ENCODE measurements at regions of chr4 and their contacts with region 1.

Region 1: GRCh38 chr4:54322818-54323417 is 93.8 kb downstream of the PDGFRA start:
- DNase-seq: peak; percentile 20
- ATAC-seq: peak; percentile 87
- H3K4me3 ChIP-seq: no peak overlapping the region
- H3K27ac ChIP-seq: no peak overlapping the region
- H3K4me1 ChIP-seq: no peaks in the 10 kb centered on the region
- H3K27me3 ChIP-seq: no peaks in the 10 kb centered on the region
- CTCF ChIP-seq: peak; percentile 74

Region 2: GRCh38 chr4:53346920-53347852 is 975.7 kb before region 1 on chr4:
- CTCF ChIA-PET with region 1: no interaction called
- POLR2A ChIA-PET with region 1: no interaction called
- in situ Hi-C with region 1: no loop called
- intact Hi-C with region 1: no loop called
- DNase-seq: no peak
- ATAC-seq: peak; percentile 34; the same call in 1 of the 2 replicates
- H3K4me3 ChIP-seq: no peak overlapping the region
- H3K27ac ChIP-seq: no peak overlapping the region
- H3K4me1 ChIP-seq: peaks cover 3% of the 10 kb centered on the region; the same call in 1 of the 2 replicates
- H3K27me3 ChIP-seq: no peaks in the 10 kb centered on the region
- CTCF ChIP-seq: no peak

Region 3: DNA sequence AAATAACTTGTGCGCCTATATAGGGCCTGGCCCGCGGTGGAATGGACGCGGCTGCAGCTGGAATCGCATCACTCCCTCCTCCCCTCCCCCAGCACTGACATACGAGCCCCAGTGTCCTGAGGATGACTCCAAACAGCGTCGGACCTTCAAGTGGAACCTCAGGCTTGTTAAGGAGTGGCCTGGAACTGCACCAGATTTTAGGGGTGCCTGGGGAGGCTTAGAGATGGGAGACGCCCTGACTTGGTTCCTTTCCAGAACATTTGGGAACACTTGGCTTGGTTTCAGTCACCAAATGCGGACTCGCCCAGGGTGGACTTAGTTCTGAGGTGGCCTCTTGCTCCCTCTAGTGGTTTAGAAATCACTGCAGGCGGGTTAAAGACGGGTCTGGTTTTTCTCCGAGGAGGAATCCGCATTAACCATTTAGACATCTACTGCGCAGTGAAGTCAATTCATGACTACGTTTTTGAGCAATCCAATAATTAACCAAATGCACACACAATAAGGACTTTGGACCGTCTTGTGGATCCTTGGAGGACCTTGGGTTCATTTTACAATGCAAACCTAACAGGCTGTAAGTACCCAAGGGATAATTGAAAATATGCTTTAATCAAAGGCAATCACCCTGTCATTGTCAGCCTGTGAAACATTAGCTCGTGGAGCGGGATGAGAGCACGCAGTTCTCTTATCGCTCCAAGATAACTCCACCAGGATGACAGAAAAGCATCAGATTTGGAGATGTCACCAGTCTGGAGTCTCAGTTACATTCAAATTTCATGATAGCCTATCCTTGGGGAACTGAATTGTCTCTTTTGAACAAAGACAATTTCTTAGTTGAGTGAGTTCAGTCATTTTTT is 105.0 kb before region 1 on chr4:
- CTCF ChIA-PET with region 1: no interaction called
- POLR2A ChIA-PET with region 1: no interaction called
- in situ Hi-C with region 1: no loop called
- intact Hi-C with region 1: no loop called
- DNase-seq: peak; percentile 80
- ATAC-seq: peak; percentile 95
- H3K4me3 ChIP-seq: peak overlapping the region; percentile 41 to 74
- H3K27ac ChIP-seq: no peak overlapping the region
- H3K4me1 ChIP-seq: no peaks in the 10 kb centered on the region
- H3K27me3 ChIP-seq: no peaks in the 10 kb centered on the region; the same call in 1 of the 2 replicates
- CTCF ChIP-seq: peak; percentile 82

Region 4: DNA sequence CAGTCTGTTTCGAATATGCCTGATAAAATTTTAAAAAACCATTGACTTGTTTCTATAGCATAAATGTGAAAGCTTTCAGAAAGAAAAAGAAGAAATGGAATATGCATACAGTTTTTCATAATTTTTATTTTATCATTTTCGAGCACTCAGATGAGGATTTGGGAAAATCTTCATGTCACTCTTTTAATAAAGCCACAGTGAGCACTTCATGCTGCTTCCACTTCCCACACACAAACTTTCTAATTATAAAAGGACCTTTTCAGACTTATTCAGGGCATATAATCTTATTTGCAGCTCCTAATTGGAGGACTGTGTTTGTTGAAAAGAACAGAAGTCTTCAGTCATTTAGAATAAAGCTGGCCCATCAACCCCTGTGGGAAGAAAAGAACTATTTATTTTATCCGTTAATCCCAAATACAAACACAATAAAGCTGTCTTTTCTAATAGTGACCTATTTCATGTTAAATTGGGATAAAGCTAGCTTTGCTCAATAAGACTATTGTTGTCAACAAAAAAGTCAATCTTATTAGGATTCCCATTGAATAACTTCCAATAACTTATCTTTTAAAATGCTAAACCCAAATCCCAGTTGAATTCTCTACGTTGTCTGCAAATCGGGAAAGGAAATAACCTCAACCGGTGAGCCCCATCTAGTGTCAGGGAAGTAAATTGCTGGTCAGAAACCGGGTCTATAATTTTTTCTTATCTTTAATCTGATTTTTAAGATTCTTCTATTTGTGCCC is 117.6 kb after region 1 on chr4:
- CTCF ChIA-PET with region 1: no interaction called
- POLR2A ChIA-PET with region 1: no interaction called
- in situ Hi-C with region 1: no loop called
- intact Hi-C with region 1: loop called (anchors 2 kb)
- DNase-seq: no peak
- ATAC-seq: no peak
- H3K4me3 ChIP-seq: no peak overlapping the region
- H3K27ac ChIP-seq: no peak overlapping the region
- H3K4me1 ChIP-seq: no peaks in the 10 kb centered on the region
- H3K27me3 ChIP-seq: no peaks in the 10 kb centered on the region
- CTCF ChIP-seq: peak; percentile 58; the same call in 1 of the 2 replicates

Region 5: DNA sequence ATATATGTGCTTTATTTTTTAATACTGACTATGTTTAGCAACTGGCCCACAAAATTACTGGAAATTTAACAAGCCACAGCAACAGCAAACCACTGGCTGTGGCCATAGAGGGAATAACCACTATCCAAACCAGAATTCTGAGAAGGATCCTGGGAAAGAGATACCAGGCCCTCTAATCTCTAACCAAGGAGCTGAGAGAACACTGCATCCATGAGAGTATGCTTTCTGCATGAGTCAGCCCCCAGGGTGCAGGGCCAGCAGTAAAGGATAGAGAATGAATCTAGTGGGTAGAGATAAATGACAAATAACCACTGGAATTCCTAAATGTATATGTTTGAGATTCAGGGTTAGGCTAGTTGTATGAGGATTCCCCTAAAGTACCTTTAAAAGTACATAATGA is 556.7 kb after region 1 on chr4:
- CTCF ChIA-PET with region 1: no interaction called
- POLR2A ChIA-PET with region 1: no interaction called
- in situ Hi-C with region 1: no loop called
- intact Hi-C with region 1: no loop called
- DNase-seq: no peak
- ATAC-seq: no peak
- H3K4me3 ChIP-seq: no peak overlapping the region
- H3K27ac ChIP-seq: no peak overlapping the region
- H3K4me1 ChIP-seq: no peaks in the 10 kb centered on the region
- H3K27me3 ChIP-seq: no peaks in the 10 kb centered on the region
- CTCF ChIP-seq: no peak

Region 6: DNA sequence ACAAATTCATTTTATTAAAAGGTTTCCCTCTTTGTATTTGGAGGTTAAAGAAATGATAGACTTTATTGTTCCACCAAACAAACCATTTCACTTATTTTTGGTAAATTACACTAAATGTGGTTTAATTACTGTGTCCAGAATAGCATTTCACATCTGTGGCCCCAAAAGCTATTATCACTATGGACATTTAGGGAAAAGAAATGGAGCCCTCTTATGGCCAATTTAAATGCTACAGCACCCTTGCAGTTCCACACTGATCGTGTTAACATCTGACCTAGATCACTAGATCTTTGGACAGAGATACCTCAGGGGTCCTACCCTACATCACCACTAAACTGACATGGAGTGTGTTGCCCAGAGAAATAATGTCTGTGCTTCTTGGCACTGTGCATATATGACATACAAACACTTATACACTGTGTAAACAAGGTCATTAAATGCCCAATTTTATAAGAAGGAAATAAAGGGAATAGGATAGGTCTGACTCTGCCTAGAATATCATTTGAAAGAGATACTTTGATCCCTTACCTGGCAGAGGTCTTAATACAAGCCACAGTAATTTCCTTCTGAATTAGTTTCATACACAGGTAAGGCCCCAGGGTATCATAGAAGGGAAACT is 638.5 kb after region 1 on chr4:
- CTCF ChIA-PET with region 1: no interaction called
- POLR2A ChIA-PET with region 1: no interaction called
- in situ Hi-C with region 1: no loop called
- intact Hi-C with region 1: loop called (anchors 5 kb)
- DNase-seq: peak; percentile 2
- ATAC-seq: peak; percentile 58; the same call in 1 of the 2 replicates
- H3K4me3 ChIP-seq: no peak overlapping the region
- H3K27ac ChIP-seq: no peak overlapping the region
- H3K4me1 ChIP-seq: no peaks in the 10 kb centered on the region
- H3K27me3 ChIP-seq: no peaks in the 10 kb centered on the region
- CTCF ChIP-seq: peak; percentile 57

Measured in Panc1 (cell line).